Adrenal gland (tissue), 19 donors: ENCODE measurements at regions of chr3 and their contacts with region 1.

Region 1: DNA sequence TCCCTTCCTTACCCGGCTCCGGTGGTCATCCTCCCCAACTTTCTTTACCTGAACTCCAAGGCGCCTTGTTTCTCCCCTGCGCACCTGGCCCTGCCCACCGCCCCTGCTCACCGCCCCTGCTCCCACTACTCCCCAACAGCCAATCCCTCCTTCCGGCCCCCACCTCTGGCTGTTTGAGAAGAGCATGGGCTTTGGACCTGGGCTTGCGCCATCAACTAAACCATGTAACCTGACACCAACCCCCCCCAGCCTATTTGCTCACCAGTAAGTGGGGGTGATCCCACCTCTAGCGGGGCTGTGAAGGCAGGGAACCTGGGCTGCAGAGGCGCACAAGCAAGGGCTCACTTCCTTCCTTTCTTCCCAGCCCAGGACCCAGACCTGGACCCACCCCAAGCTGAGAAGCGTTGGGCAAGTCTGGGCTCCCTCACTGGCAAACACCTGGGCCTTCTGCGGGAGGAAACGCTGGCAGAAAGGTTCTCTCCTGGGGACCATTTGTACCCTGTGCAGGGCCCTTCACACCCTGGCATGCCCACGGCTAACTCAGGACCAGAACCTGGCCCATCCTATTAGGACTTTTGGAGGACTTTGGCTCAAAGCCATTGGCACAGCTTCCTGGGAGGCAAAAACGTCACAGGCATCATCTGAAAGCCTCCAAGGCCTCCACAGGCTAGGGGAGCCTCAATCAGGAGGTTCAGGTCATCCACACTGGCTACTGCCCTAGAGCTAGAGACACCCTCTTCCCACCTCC is at the start of gene PLXNB1:
- DNase-seq: peak; percentile 38 to 79 (median 50)
- H3K4me3 ChIP-seq: peak within 1 kb of the TSS; percentile 28 to 93 (median 62)
- H3K27ac ChIP-seq: peak within 1 kb of the TSS in 4 of 5 donors; percentile 53 to 79 (median 66)
- H3K4me1 ChIP-seq: peaks cover 7 to 19% of the 10 kb centered on the region in 2 donors
- H3K27me3 ChIP-seq: no peaks in the 10 kb centered on the region
- CTCF ChIP-seq: no peak
- POLR2A ChIP-seq: no peak
- total RNA-seq, gene PLXNB1: 3.4 to 23.5 (median 11.1) TPM

Region 2: GRCh38 chr3:48273594-48274211 is 156.4 kb before region 1 on chr3:
- intact Hi-C with region 1: loop called (anchors 5 kb)
- DNase-seq: peak; percentile 37 to 80 (median 55)
- H3K4me3 ChIP-seq: no peak overlapping the region
- H3K27ac ChIP-seq: no peak overlapping the region
- H3K4me1 ChIP-seq: no peaks in the 10 kb centered on the region
- H3K27me3 ChIP-seq: no peaks in the 10 kb centered on the region
- CTCF ChIP-seq: peak; percentile 58 to 80 (median 74)
- POLR2A ChIP-seq: no peak

Region 3: GRCh38 chr3:48402281-48402732 is 27.8 kb before region 1 on chr3:
- intact Hi-C with region 1: loop called (anchors 1 to 5 kb)
- DNase-seq: peak; percentile 71 to 91 (median 86)
- H3K4me3 ChIP-seq: no peak overlapping the region
- H3K27ac ChIP-seq: peak overlapping the region in 3 of 5 donors; percentile 16 to 81 (median 80)
- H3K4me1 ChIP-seq: peaks cover 0 to 5% of the 10 kb centered on the region in 2 donors
- H3K27me3 ChIP-seq: no peaks in the 10 kb centered on the region
- CTCF ChIP-seq: no peak
- POLR2A ChIP-seq: no peak

Region 4: GRCh38 chr3:48851407-48851806 is 421.3 kb after region 1 on chr3:
- intact Hi-C with region 1: no loop called
- DNase-seq: peak in 2 of 7 donors; percentile 15 to 83
- H3K4me3 ChIP-seq: no peak overlapping the region
- H3K27ac ChIP-seq: no peak overlapping the region
- H3K4me1 ChIP-seq: peaks cover 2 to 12% of the 10 kb centered on the region in 2 donors
- H3K27me3 ChIP-seq: no peaks in the 10 kb centered on the region
- CTCF ChIP-seq: no peak
- POLR2A ChIP-seq: no peak